CD8-positive, alpha-beta T cell (primary cell): ENCODE measurements at regions of chr14 and their contacts with region 1.

Region 1: DNA sequence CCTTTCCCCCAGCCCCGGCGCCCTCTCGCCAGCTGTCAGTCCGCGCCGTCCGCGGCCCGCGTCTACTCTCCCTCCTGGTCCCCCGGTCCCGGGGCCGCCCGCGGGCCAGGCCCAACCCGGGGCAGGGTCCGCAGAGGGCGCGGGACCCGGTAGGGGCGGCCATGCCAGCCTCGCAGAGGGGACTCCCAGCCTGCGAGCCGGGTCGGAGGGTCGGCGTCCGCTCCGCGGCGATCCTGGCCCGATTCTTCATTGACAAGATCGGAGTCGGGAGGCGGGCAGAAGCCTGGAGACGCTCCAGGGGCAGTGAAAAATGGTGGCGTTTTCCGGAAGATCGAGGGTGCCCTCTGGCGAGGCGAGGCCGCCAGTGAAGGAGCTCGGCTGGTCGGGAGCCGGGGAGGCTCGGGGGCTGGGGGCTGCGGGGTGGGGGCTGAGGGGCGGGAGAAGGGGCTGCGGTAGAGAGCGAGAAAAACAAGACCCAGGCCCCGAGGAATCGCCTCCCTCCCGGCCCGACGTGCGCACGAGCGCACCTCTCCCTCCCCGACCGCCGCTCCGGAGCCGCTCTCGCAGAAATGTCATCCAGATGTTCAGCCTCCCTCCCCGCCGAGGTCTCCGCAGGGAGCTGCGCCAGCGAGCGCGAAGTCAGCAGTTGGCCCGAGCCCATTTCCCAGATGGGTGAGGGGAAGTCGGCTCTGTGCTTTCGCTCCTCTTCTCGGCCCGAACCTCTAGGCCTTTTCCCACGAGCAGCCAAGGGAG is 647 bp upstream of the TGFB3 start:
- DNase-seq: peak; percentile 57 to 87 (median 77)
- ATAC-seq: peak; percentile 59
- H3K4me3 ChIP-seq: peak overlapping the region; percentile 59 to 87
- H3K4me3 Mint-ChIP-seq: peak overlapping the region; percentile 82
- H3K27ac ChIP-seq: peak overlapping the region; percentile 64 to 75
- H3K27ac Mint-ChIP-seq: peak overlapping the region; percentile 86
- H3K4me1 ChIP-seq: peaks cover 33% of the 10 kb centered on the region
- H3K4me1 Mint-ChIP-seq: peaks cover 57% of the 10 kb centered on the region
- H3K27me3 ChIP-seq: no peaks in the 10 kb centered on the region
- H3K27me3 Mint-ChIP-seq: no peaks in the 10 kb centered on the region
- CTCF ChIP-seq: peak; percentile 48

Region 2: GRCh38 chr14:74084277-74085046 is 1898.0 kb before region 1 on chr14 and contains the starts of genes ALDH6A1 and LIN52:
- CTCF ChIA-PET with region 1: no interaction called
- POLR2A ChIA-PET with region 1: no interaction called
- intact Hi-C with region 1: loop called in 1 of 2 experiments (anchors 10 kb)
- DNase-seq: peak; percentile 100
- ATAC-seq: peak; percentile 85
- H3K4me3 ChIP-seq: peak within 1 kb of the TSS; percentile 80 to 90
- H3K4me3 Mint-ChIP-seq: peak within 1 kb of the TSS; percentile 98
- H3K27ac ChIP-seq: peak within 1 kb of the TSS; percentile 70 to 73
- H3K27ac Mint-ChIP-seq: peak within 1 kb of the TSS; percentile 96
- H3K4me1 ChIP-seq: peaks cover 19% of the 10 kb centered on the region
- H3K4me1 Mint-ChIP-seq: peaks cover 33% of the 10 kb centered on the region
- H3K27me3 ChIP-seq: no peaks in the 10 kb centered on the region
- H3K27me3 Mint-ChIP-seq: no peaks in the 10 kb centered on the region
- CTCF ChIP-seq: no peak
- total RNA-seq, gene ALDH6A1: 3.8 to 4.0 TPM
- total RNA-seq, gene LIN52: 6.1 to 6.8 TPM

Region 3: GRCh38 chr14:75063407-75064213 is 918.8 kb before region 1 on chr14 and contains the start of gene ACYP1:
- CTCF ChIA-PET with region 1: no interaction called
- POLR2A ChIA-PET with region 1: no interaction called
- intact Hi-C with region 1: loop called in 1 of 2 experiments (anchors 10 kb)
- DNase-seq: peak; percentile 78 to 93 (median 89)
- ATAC-seq: peak; percentile 99
- H3K4me3 ChIP-seq: peak within 1 kb of the TSS; percentile 80 to 84
- H3K4me3 Mint-ChIP-seq: peak within 1 kb of the TSS; percentile 99
- H3K27ac ChIP-seq: peak within 1 kb of the TSS; percentile 60 to 68
- H3K27ac Mint-ChIP-seq: peak within 1 kb of the TSS; percentile 95
- H3K4me1 ChIP-seq: peaks cover 9% of the 10 kb centered on the region
- H3K4me1 Mint-ChIP-seq: peaks cover 27% of the 10 kb centered on the region
- H3K27me3 ChIP-seq: no peaks in the 10 kb centered on the region
- H3K27me3 Mint-ChIP-seq: no peaks in the 10 kb centered on the region
- CTCF ChIP-seq: no peak
- total RNA-seq, gene ACYP1: 4.3 to 5.3 TPM

Region 4: GRCh38 chr14:75577729-75578101 is 404.7 kb before region 1 on chr14:
- CTCF ChIA-PET with region 1: interaction called, 12 read pairs
- POLR2A ChIA-PET with region 1: no interaction called
- intact Hi-C with region 1: loop called in 1 of 2 experiments (anchors 1 kb)
- DNase-seq: peak; percentile 34 to 79 (median 69)
- ATAC-seq: peak; percentile 80
- H3K4me3 ChIP-seq: peak overlapping the region; percentile 64 to 72
- H3K4me3 Mint-ChIP-seq: peak overlapping the region; percentile 91
- H3K27ac ChIP-seq: no peak overlapping the region
- H3K27ac Mint-ChIP-seq: peak overlapping the region; percentile 53
- H3K4me1 ChIP-seq: peaks cover 10% of the 10 kb centered on the region
- H3K4me1 Mint-ChIP-seq: peaks cover 23% of the 10 kb centered on the region
- H3K27me3 ChIP-seq: no peaks in the 10 kb centered on the region
- H3K27me3 Mint-ChIP-seq: no peaks in the 10 kb centered on the region
- CTCF ChIP-seq: peak; percentile 62

Region 5: GRCh38 chr14:75709207-75709812 is 273.1 kb before region 1 on chr14:
- CTCF ChIA-PET with region 1: interaction called, 113 read pairs
- POLR2A ChIA-PET with region 1: interaction called, 7 read pairs
- intact Hi-C with region 1: loop called (anchors 1 kb)
- DNase-seq: peak; percentile 23 to 76 (median 62)
- ATAC-seq: peak; percentile 68
- H3K4me3 ChIP-seq: no peak overlapping the region
- H3K4me3 Mint-ChIP-seq: no peak overlapping the region
- H3K27ac ChIP-seq: no peak overlapping the region
- H3K27ac Mint-ChIP-seq: no peak overlapping the region
- H3K4me1 ChIP-seq: no peaks in the 10 kb centered on the region
- H3K4me1 Mint-ChIP-seq: no peaks in the 10 kb centered on the region
- H3K27me3 ChIP-seq: no peaks in the 10 kb centered on the region
- H3K27me3 Mint-ChIP-seq: no peaks in the 10 kb centered on the region
- CTCF ChIP-seq: peak; percentile 78

Region 6: GRCh38 chr14:75968456-75968855 is 14.0 kb before region 1 on chr14:
- CTCF ChIA-PET with region 1: interaction called, 30 read pairs
- POLR2A ChIA-PET with region 1: no interaction called
- intact Hi-C with region 1: no loop called
- DNase-seq: no peak
- ATAC-seq: no peak
- H3K4me3 ChIP-seq: no peak overlapping the region
- H3K4me3 Mint-ChIP-seq: no peak overlapping the region
- H3K27ac ChIP-seq: no peak overlapping the region
- H3K27ac Mint-ChIP-seq: no peak overlapping the region
- H3K4me1 ChIP-seq: no peaks in the 10 kb centered on the region
- H3K4me1 Mint-ChIP-seq: no peaks in the 10 kb centered on the region
- H3K27me3 ChIP-seq: no peaks in the 10 kb centered on the region
- H3K27me3 Mint-ChIP-seq: no peaks in the 10 kb centered on the region
- CTCF ChIP-seq: no peak